Mammary epithelial cell (primary cell): ENCODE measurements at regions of chr6 and their contacts with region 1.

Region 1: GRCh38 chr6:9540534-9541126 is 874.2 kb downstream of the TFAP2A start:
- DNase-seq: peak; percentile 72
- H3K4me3 ChIP-seq: no peak overlapping the region
- H3K27ac ChIP-seq: no peak overlapping the region
- H3K4me1 ChIP-seq: no peaks in the 10 kb centered on the region
- H3K27me3 ChIP-seq: no peaks in the 10 kb centered on the region
- CTCF ChIP-seq: peak; percentile 74 to 80

Region 2: GRCh38 chr6:9711365-9711764 is 170.7 kb after region 1 on chr6:
- CTCF ChIA-PET with region 1: no interaction called
- dilution Hi-C with region 1: no loop called
- in situ Hi-C with region 1: no loop called
- intact Hi-C with region 1: loop called (anchors 10 kb)
- DNase-seq: no peak
- H3K4me3 ChIP-seq: no peak overlapping the region
- H3K27ac ChIP-seq: no peak overlapping the region
- H3K4me1 ChIP-seq: no peaks in the 10 kb centered on the region
- H3K27me3 ChIP-seq: peaks cover 3% of the 10 kb centered on the region
- CTCF ChIP-seq: no peak

Region 3: GRCh38 chr6:9851541-9852380 is 311.1 kb after region 1 on chr6:
- CTCF ChIA-PET with region 1: no interaction called
- dilution Hi-C with region 1: no loop called
- in situ Hi-C with region 1: loop called in 1 of 2 experiments (anchors 25 kb)
- intact Hi-C with region 1: loop called (anchors 1 kb)
- DNase-seq: peak; percentile 76
- H3K4me3 ChIP-seq: no peak overlapping the region
- H3K27ac ChIP-seq: peak overlapping the region; percentile 20
- H3K4me1 ChIP-seq: peaks cover 9% of the 10 kb centered on the region
- H3K27me3 ChIP-seq: no peaks in the 10 kb centered on the region
- CTCF ChIP-seq: peak; percentile 66 to 69

Region 4: GRCh38 chr6:10369881-10370280 is 829.3 kb after region 1 on chr6:
- CTCF ChIA-PET with region 1: no interaction called
- dilution Hi-C with region 1: no loop called
- in situ Hi-C with region 1: no loop called
- intact Hi-C with region 1: no loop called
- DNase-seq: peak; percentile 79
- H3K4me3 ChIP-seq: no peak overlapping the region
- H3K27ac ChIP-seq: peak overlapping the region; percentile 19
- H3K4me1 ChIP-seq: peaks cover 6% of the 10 kb centered on the region
- H3K27me3 ChIP-seq: no peaks in the 10 kb centered on the region
- CTCF ChIP-seq: no peak